ENCODE measurements at regions of chr2 and their contacts with region 1.

Region 1: DNA sequence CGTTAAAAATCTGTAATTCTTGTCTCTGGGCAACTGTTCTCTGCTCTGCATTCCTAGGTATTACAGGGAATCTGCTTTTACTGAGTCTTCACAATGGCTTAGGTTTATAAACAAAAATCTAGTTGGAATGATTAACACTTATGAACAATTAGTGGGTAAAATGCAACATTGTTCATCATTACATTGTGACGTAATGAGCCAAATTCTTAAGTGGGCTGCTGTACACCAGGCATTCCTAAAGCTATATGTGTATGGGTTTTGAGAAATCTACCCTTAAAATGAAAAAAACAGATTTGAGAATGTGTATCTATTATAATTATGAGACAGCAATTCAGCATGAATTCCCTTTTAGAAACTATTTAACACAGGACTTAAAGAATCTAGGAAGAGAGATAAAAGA is 41.5 kb upstream of the ERBB4 start:
- DNase-seq: no peak
- H3K4me3 ChIP-seq: no peak overlapping the region
- H3K27ac ChIP-seq: no peak overlapping the region
- H3K4me1 ChIP-seq: no peaks in the 10 kb centered on the region
- H3K27me3 ChIP-seq: no peaks in the 10 kb centered on the region
- CTCF ChIP-seq: no peak
- POLR2A ChIP-seq: no peak

Region 2: DNA sequence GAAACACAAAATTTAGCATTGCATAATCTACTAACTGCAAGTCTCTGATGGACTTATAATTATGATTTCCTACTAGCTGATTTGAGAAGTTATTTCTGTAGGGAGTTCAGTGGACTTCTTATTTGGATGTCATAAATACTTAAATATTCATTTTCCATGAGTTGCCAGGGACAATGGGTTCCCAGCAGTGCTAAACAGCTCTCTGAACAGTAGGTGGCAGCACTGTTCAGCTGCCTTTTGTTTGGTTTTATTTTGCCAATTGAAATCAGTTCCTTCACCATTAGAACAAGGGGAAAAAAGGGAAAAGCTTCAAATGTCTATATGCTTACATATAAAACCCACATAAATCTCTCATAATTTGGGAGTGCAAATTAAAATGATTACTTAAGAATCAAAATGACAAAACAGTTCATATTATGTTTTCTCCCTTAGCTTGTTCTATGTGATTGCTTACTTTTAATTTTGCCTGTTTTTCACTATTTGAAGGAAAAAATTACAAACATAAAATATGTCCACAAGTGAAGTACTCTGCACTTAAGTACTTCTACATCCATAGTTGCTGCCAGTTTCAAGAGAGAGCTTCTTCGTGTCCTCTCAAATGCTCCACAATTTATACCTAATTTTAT is 1124.8 kb before region 1 on chr2:
- intact Hi-C with region 1: loop called (anchors 10 kb)
- DNase-seq: peak; percentile 36 to 43
- H3K4me3 ChIP-seq: no peak overlapping the region
- H3K27ac ChIP-seq: no peak overlapping the region
- H3K4me1 ChIP-seq: peaks cover 0 to 4% of the 10 kb centered on the region in 2 donors
- H3K27me3 ChIP-seq: no peaks in the 10 kb centered on the region
- CTCF ChIP-seq: peak; percentile 64 to 93 (median 69)
- POLR2A ChIP-seq: no peak

Measured in thyroid gland (tissue), 4 donors.